ENCODE measurements at regions of chr1 and their contacts with region 1.

Region 1: GRCh38 chr1:26035959-26036755 is 9.8 kb downstream of the SLC30A2 start:
- DNase-seq: peak; percentile 53 to 89 (median 73)
- ATAC-seq: peak; percentile 87
- H3K4me3 ChIP-seq: peak overlapping the region; percentile 99
- H3K4me3 Mint-ChIP-seq: peak overlapping the region; percentile 93 to 97 (median 96)
- H3K27ac ChIP-seq: peak overlapping the region; percentile 87
- H3K27ac Mint-ChIP-seq: peak overlapping the region; percentile 74 to 96 (median 90)
- H3K4me1 ChIP-seq: peaks cover 5 to 6% of the 10 kb centered on the region in 2 donors
- H3K4me1 Mint-ChIP-seq: peaks cover 0 to 15% (median 8%) of the 10 kb centered on the region in 7 donors
- H3K27me3 ChIP-seq: no peaks in the 10 kb centered on the region
- H3K27me3 Mint-ChIP-seq: peaks cover 0 to 19% (median 0%) of the 10 kb centered on the region in 5 donors

Region 2: DNA sequence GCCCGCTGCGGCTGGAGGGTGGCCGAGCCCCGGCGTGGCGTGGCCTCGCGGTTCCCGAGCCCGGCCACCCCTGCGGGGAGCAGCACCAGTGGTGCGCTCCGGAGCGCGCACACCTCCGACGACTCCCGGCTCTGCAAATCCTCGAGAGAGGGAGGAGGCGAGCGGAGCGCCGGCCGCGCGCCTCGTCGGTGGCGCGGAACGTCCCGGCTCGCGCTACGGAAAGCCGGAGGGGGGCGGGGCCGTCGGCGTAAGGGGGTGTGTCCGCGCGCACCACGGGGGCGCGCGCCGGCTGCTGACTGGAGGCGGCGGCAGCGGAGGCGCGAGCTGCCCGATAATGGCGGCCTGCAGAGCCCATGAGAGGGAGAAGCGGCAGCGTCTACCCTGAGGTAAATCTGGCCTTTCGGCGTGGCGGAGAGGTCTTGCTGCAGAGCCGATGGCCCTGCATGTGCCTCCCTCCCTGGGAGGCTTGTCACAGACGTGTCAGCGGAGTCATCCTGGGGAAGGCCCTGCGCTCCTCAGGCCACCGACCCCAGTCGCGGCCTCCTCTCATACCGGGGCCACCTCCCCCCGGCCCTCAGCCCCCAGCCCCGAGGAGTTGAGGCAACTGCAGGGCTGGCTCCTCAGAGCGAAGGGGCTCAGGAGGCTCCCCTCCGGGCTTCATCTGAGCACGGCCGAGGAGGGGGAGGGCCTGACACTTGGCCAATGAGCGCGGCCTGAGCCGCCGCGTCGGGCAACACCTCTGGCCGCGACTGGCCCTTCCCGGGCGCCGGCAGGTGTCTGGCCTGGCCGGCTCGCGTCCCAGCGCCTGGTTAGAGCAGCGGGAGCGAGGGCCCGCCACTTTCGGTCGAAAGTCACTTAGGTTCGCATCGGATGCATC is 75.6 kb after region 1 on chr1 and contains the start of gene PDIK1L:
- CTCF ChIA-PET with region 1: no interaction called
- POLR2A ChIA-PET with region 1: no interaction called
- intact Hi-C with region 1: loop called (anchors 1 to 2 kb)
- DNase-seq: peak; percentile 91 to 95 (median 94)
- ATAC-seq: peak; percentile 93
- H3K4me3 ChIP-seq: peak within 1 kb of the TSS; percentile 93
- H3K4me3 Mint-ChIP-seq: peak within 1 kb of the TSS; percentile 86 to 99 (median 93)
- H3K27ac ChIP-seq: peak within 1 kb of the TSS; percentile 84
- H3K27ac Mint-ChIP-seq: peak within 1 kb of the TSS; percentile 84 to 98 (median 92)
- H3K4me1 ChIP-seq: peaks cover 12 to 19% of the 10 kb centered on the region in 2 donors
- H3K4me1 Mint-ChIP-seq: peaks cover 6 to 44% (median 34%) of the 10 kb centered on the region in 7 donors
- H3K27me3 ChIP-seq: no peaks in the 10 kb centered on the region
- H3K27me3 Mint-ChIP-seq: no peaks in the 10 kb centered on the region
- total RNA-seq, gene PDIK1L: 9.1 to 29.6 (median 20.3) TPM

Region 3: GRCh38 chr1:26145041-26145959 is 109.1 kb after region 1 on chr1:
- CTCF ChIA-PET with region 1: interaction called, 7 read pairs
- POLR2A ChIA-PET with region 1: no interaction called
- intact Hi-C with region 1: loop called (anchors 1 kb)
- DNase-seq: peak; percentile 52 to 77 (median 72)
- ATAC-seq: peak; percentile 99
- H3K4me3 ChIP-seq: no peak overlapping the region
- H3K4me3 Mint-ChIP-seq: peak overlapping the region in 5 of 10 donors; percentile 15 to 66 (median 37)
- H3K27ac ChIP-seq: no peak overlapping the region
- H3K27ac Mint-ChIP-seq: peak overlapping the region in 1 of 9 donors; percentile 19
- H3K4me1 ChIP-seq: no peaks in the 10 kb centered on the region
- H3K4me1 Mint-ChIP-seq: peaks cover 0 to 8% (median 4%) of the 10 kb centered on the region in 7 donors
- H3K27me3 ChIP-seq: no peaks in the 10 kb centered on the region
- H3K27me3 Mint-ChIP-seq: peaks cover 0 to 32% (median 0%) of the 10 kb centered on the region in 5 donors

Region 4: DNA sequence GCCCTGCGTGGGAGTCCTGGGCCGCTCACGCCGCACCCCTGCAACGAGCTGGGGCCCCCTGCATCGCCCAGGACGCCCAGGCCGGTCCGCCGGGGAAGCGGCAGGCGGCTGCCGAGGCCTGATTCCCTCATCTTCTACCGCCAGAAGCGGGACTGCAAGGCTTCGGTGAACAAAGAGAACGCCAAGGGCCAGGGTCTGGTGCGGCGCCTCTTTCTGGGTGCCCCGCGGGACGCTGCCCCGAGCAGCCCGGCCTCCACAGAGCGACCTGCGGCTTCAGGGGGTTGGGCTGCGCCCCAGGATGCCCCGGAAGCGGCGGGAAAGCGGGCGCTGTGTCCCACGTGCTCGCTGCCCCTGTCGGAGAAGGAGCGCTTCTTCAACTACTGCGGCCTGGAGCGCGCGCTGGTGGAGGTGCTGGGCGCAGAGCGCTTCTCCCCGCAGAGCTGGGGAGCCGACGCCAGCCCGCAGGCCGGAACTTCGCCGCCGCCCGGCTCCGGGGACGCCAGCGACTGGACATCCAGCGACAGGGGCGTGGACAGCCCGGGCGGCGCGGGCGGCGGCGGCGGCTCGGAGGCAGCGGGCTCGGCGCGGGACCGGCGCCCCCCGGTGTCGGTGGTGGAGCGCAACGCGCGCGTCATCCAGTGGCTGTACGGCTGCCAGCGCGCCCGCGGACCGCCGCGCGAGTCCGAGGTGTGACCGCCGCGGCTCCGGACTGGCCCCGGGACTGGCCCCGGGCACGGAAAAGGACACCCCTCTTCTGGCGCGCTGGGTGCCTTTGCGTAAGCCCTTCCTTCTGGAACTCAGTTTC is 125.5 kb after region 1 on chr1:
- CTCF ChIA-PET with region 1: interaction called, 7 read pairs
- POLR2A ChIA-PET with region 1: interaction called, 3 read pairs
- intact Hi-C with region 1: loop called (anchors 1 kb)
- DNase-seq: peak in 7 of 9 donors; percentile 28 to 59 (median 38)
- ATAC-seq: peak; percentile 66
- H3K4me3 ChIP-seq: peak overlapping the region; percentile 30
- H3K4me3 Mint-ChIP-seq: peak overlapping the region in 9 of 10 donors; percentile 45 to 80 (median 66)
- H3K27ac ChIP-seq: no peak overlapping the region
- H3K27ac Mint-ChIP-seq: no peak overlapping the region
- H3K4me1 ChIP-seq: no peaks in the 10 kb centered on the region
- H3K4me1 Mint-ChIP-seq: peaks cover 0 to 32% (median 11%) of the 10 kb centered on the region in 7 donors
- H3K27me3 ChIP-seq: peaks cover 0 to 11% of the 10 kb centered on the region in 2 donors
- H3K27me3 Mint-ChIP-seq: peaks cover 16 to 61% (median 28%) of the 10 kb centered on the region in 5 donors

Region 5: DNA sequence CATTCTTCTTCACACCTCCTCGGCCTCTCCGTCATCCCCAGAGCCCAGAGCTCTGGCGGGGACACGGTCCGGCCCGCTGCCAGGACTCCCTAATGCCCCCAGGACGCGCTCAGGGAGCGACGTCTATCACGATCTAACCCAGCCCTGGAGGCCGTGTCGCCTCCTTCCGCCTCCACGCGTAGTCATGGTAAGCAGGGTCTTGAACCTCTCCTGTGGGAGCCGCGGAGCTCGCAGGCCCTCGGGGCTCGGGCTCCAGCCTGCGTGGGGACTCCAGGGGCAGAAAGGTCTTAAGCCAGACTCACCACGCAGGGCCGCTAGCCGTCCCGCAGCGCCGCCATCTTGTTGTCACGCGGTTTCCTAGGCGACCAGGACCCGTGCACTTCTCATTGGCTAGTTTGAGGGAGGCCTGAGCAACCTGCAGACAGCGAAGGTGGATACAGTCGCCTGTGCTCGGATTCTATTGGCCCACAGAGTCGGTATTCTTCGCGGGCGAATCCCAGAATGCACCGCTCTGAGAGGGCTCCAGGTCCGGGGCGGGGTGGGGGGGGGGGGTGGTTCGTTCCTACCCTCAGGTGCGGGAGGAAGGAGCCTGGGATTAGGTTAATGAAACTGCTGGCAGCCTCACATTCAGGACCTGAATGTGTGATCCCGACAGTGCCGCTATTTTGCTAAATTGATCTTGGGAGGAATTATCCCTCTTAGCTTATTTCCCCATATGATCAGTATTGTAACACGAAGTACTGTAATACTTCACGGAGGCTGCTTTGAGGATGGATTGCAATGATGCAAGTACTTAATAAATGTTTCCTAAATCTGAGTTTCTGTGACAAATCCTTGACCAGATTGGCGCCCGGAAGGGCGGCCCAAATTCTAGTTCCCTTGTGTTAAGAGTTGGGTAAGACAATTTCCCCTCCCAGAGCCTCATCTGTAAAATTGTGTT is 270.4 kb after region 1 on chr1 and contains the start of gene UBXN11:
- CTCF ChIA-PET with region 1: no interaction called
- POLR2A ChIA-PET with region 1: no interaction called
- intact Hi-C with region 1: loop called in 1 of 2 experiments (anchors 5 kb)
- DNase-seq: peak; percentile 66 to 95 (median 89)
- ATAC-seq: peak; percentile 99
- H3K4me3 ChIP-seq: peak within 1 kb of the TSS; percentile 87
- H3K4me3 Mint-ChIP-seq: peak within 1 kb of the TSS; percentile 93 to 99 (median 98)
- H3K27ac ChIP-seq: peak within 1 kb of the TSS; percentile 76
- H3K27ac Mint-ChIP-seq: peak within 1 kb of the TSS; percentile 90 to 99 (median 96)
- H3K4me1 ChIP-seq: peaks cover 16 to 31% of the 10 kb centered on the region in 2 donors
- H3K4me1 Mint-ChIP-seq: peaks cover 25 to 58% (median 34%) of the 10 kb centered on the region in 7 donors
- H3K27me3 ChIP-seq: no peaks in the 10 kb centered on the region
- H3K27me3 Mint-ChIP-seq: no peaks in the 10 kb centered on the region
- total RNA-seq, gene UBXN11: 35.7 to 131 (median 124) TPM

Region 6: DNA sequence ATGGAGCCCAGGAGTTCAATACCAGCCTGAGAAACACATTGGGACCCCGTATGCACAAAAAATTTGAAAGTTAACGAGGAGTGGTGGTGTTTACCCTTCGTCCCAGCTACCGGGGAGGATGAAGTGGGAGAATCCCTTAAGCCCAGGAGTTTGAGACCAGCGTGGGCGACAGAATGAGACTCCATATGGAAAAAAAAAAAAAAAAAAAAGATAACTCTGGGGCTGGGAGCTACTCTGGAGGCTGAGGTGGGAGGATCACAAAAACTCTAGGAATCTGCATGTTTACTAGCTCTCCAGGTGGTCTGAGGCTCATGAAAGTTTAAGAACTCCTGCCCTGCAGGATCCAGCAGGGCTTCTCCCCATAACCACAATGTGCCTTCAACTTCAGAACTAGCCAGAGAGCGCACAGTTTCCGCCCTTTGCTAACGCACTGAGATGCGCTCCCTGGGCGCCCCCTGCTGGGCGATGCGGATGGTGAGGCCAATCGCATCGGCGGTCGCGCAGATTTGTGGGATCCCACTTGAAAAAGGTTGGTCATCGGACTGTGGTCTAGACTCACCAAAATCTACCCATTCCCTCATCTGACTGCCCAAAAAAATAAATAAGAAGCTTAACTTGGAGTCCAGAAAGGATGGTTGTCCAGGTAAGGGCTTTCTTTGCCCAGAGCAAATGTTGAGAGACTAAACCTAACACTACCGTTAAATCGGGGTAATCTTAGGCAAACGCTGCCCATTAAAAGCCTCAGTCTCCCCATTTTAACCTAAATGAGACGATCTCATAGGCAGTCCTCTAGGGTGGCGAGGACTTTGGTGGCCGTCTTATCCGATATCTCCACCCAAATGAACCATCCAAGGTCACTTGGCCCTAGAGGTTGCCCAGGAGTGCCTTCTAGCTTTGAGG is 327.6 kb after region 1 on chr1:
- CTCF ChIA-PET with region 1: no interaction called
- POLR2A ChIA-PET with region 1: no interaction called
- intact Hi-C with region 1: loop called in 1 of 2 experiments (anchors 5 kb)
- DNase-seq: peak; percentile 71 to 87 (median 82)
- ATAC-seq: peak; percentile 84
- H3K4me3 ChIP-seq: no peak overlapping the region
- H3K4me3 Mint-ChIP-seq: peak overlapping the region in 6 of 10 donors; percentile 39 to 72 (median 40)
- H3K27ac ChIP-seq: no peak overlapping the region
- H3K27ac Mint-ChIP-seq: peak overlapping the region in 4 of 9 donors; percentile 20 to 52 (median 40)
- H3K4me1 ChIP-seq: peaks cover 30 to 44% of the 10 kb centered on the region in 2 donors
- H3K4me1 Mint-ChIP-seq: peaks cover 28 to 53% (median 47%) of the 10 kb centered on the region in 7 donors
- H3K27me3 ChIP-seq: no peaks in the 10 kb centered on the region
- H3K27me3 Mint-ChIP-seq: peaks cover 7 to 37% (median 16%) of the 10 kb centered on the region in 5 donors